Heart left ventricle (tissue), 16 donors: ENCODE measurements at regions of chr15 and their contacts with region 1.

Region 1: DNA sequence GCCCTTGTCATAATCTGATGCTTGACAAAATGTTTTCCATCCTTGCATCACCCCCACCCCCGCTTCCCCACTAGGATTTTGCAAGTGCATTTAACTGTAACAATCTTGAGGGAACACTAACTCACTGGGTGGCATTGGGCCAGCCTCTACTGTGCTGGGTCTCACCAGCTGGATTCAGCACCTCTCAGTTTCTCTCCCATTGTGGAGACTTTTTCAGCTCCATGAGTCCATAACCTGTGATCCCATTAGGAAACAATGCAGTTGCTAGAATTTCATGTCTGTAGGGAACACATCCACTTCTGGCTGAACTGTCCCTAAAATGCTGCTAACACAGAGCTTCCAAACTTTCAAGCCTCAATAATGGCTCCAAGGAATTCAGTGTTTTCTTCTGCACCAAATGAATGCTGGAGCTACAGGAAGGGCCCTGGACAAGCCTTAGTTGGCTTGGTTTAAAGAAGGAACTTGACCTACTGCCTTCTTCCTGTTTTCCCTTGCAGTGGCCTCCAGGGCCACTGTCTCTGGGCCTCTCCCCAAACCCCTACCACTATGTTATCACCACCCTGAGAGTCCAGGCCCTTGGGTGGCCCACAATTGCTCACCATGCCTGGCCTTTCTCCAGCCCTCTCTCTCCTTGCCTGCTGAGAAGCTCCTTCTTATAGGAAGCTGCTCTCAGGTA is 15.6 kb downstream of the CYP19A1 start:
- DNase-seq: peak in 4 of 5 donors; percentile 46 to 71 (median 61)
- ATAC-seq: peak; percentile 52 to 83 (median 70)
- H3K4me3 ChIP-seq: no peak overlapping the region
- H3K27ac ChIP-seq: peak overlapping the region in 9 of 12 donors; percentile 8 to 69 (median 42)
- H3K4me1 ChIP-seq: peaks cover 0 to 38% (median 8%) of the 10 kb centered on the region in 12 donors
- H3K27me3 ChIP-seq: no peaks in the 10 kb centered on the region
- CTCF ChIP-seq: no peak
- POLR2A ChIP-seq: no peak

Region 2: GRCh38 chr15:51374131-51374530 is 51.4 kb after region 1 on chr15:
- intact Hi-C with region 1: loop called in 1 of 10 experiments (anchors 5 kb)
- DNase-seq: no peak
- ATAC-seq: no peak
- H3K4me3 ChIP-seq: no peak overlapping the region
- H3K27ac ChIP-seq: no peak overlapping the region
- H3K4me1 ChIP-seq: peaks cover 0 to 7% (median 0%) of the 10 kb centered on the region in 12 donors
- H3K27me3 ChIP-seq: no peaks in the 10 kb centered on the region
- CTCF ChIP-seq: no peak
- POLR2A ChIP-seq: no peak

Region 3: DNA sequence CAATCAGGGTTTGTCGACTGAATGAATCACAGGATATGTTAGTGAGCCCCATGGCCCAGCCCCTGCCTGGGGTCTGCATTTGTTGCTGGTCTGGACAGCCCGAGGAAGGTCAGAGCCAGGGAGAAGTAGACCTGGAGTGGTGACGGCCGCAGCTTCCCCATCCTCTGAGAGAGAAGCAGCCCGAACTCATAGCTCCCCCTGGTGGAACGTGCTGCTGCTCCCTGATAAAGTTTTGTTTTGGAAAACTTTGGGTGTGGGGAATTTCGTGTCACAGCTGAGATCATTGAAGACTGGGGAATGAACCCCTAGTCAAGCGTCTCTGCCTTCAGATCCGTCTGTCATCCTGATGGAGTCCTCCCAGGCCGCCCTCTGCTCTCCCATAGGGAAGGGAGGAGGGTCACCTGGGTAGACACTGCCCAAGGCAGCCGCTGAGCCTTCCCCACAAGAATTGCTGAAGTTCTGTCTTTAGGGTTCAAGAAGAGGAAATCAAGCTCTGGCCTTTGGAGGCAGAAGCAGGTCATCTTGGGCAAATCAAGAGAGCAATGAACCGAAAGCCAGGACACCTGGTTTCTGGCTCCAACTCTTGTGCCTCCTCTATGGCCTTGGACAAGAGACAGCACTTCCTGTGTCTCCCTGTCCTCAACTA is 79.2 kb after region 1 on chr15:
- intact Hi-C with region 1: no loop called
- DNase-seq: peak; percentile 29 to 71 (median 40)
- ATAC-seq: peak; percentile 30 to 71 (median 66)
- H3K4me3 ChIP-seq: no peak overlapping the region
- H3K27ac ChIP-seq: no peak overlapping the region
- H3K4me1 ChIP-seq: peaks cover 0 to 3% (median 0%) of the 10 kb centered on the region in 12 donors
- H3K27me3 ChIP-seq: no peaks in the 10 kb centered on the region
- CTCF ChIP-seq: peak; percentile 37 to 63 (median 46)
- POLR2A ChIP-seq: no peak